Naive thymus-derived CD4-positive, alpha-beta T cell (primary cell): ENCODE measurements at regions of chr2 and their contacts with region 1.

Region 1: GRCh38 chr2:88669371-88670214 is 21.9 kb upstream of the RPIA start:
- DNase-seq: peak in 2 of 9 donors; percentile 11 to 18
- ATAC-seq: peak; percentile 73
- H3K4me3 ChIP-seq: no peak overlapping the region
- H3K4me3 Mint-ChIP-seq: no peak overlapping the region
- H3K27ac ChIP-seq: no peak overlapping the region
- H3K27ac Mint-ChIP-seq: no peak overlapping the region
- H3K4me1 ChIP-seq: no peaks in the 10 kb centered on the region
- H3K4me1 Mint-ChIP-seq: peaks cover 0 to 6% (median 0%) of the 10 kb centered on the region in 7 donors
- H3K27me3 ChIP-seq: no peaks in the 10 kb centered on the region
- H3K27me3 Mint-ChIP-seq: peaks cover 0 to 5% (median 0%) of the 10 kb centered on the region in 5 donors

Region 2: GRCh38 chr2:88187038-88187676 is 482.4 kb before region 1 on chr2:
- CTCF ChIA-PET with region 1: no interaction called
- POLR2A ChIA-PET with region 1: no interaction called
- intact Hi-C with region 1: loop called in 1 of 2 experiments (anchors 10 kb)
- DNase-seq: peak in 2 of 9 donors; percentile 12 to 39
- ATAC-seq: peak; percentile 32
- H3K4me3 ChIP-seq: no peak overlapping the region
- H3K4me3 Mint-ChIP-seq: no peak overlapping the region
- H3K27ac ChIP-seq: no peak overlapping the region
- H3K27ac Mint-ChIP-seq: no peak overlapping the region
- H3K4me1 ChIP-seq: peaks cover 0 to under 1% of the 10 kb centered on the region in 2 donors
- H3K4me1 Mint-ChIP-seq: peaks cover 12 to 28% (median 16%) of the 10 kb centered on the region in 7 donors
- H3K27me3 ChIP-seq: no peaks in the 10 kb centered on the region
- H3K27me3 Mint-ChIP-seq: peaks cover 3 to 10% (median 8%) of the 10 kb centered on the region in 5 donors

Region 3: GRCh38 chr2:88261711-88262110 is 407.9 kb before region 1 on chr2:
- CTCF ChIA-PET with region 1: no interaction called
- POLR2A ChIA-PET with region 1: no interaction called
- intact Hi-C with region 1: loop called in 1 of 2 experiments (anchors 5 kb)
- DNase-seq: no peak
- ATAC-seq: no peak
- H3K4me3 ChIP-seq: no peak overlapping the region
- H3K4me3 Mint-ChIP-seq: no peak overlapping the region
- H3K27ac ChIP-seq: no peak overlapping the region
- H3K27ac Mint-ChIP-seq: no peak overlapping the region
- H3K4me1 ChIP-seq: no peaks in the 10 kb centered on the region
- H3K4me1 Mint-ChIP-seq: peaks cover 0 to 5% (median 0%) of the 10 kb centered on the region in 7 donors
- H3K27me3 ChIP-seq: no peaks in the 10 kb centered on the region
- H3K27me3 Mint-ChIP-seq: peaks cover 0 to 31% (median 10%) of the 10 kb centered on the region in 5 donors

Region 4: DNA sequence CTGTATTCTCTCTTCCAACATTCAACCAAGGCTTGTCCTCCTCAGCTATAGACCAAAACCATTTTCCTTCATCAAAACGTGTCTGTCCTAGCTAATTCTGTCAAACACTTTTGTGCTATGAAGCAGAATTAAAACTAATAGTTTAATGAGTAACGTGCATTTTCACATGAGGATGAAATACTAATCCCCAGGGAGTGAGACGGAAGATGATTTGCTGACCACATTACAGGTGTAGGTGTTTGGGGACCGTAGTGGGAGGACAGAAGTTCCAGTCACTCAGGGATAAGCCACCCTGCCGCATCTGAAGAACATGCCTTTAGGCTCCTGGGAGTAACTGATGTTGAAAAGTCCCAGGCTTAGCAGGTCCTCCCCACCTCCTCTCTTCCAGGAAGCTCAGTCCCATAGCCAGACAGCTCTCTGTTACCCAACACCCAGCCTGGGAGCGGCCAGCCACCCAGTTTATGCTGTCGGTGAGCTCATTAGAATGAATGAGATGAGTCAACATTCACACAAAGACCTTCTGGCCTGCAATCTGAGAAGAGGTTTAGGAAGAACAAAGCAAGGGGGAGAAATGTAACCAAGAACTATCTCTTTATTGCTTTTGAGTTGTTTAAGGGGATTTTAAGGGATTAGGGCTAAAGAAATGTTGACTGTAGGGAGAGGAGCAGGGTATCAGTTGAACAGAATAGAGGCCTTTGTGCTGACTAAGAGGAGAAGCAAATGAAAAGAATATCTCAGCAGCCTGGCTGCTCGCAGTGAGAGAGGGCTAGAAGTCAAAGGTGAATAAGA is 339.6 kb before region 1 on chr2:
- CTCF ChIA-PET with region 1: no interaction called
- POLR2A ChIA-PET with region 1: no interaction called
- intact Hi-C with region 1: loop called in 1 of 2 experiments (anchors 5 kb)
- DNase-seq: no peak
- ATAC-seq: no peak
- H3K4me3 ChIP-seq: no peak overlapping the region
- H3K4me3 Mint-ChIP-seq: no peak overlapping the region
- H3K27ac ChIP-seq: no peak overlapping the region
- H3K27ac Mint-ChIP-seq: no peak overlapping the region
- H3K4me1 ChIP-seq: no peaks in the 10 kb centered on the region
- H3K4me1 Mint-ChIP-seq: no peaks in the 10 kb centered on the region
- H3K27me3 ChIP-seq: no peaks in the 10 kb centered on the region
- H3K27me3 Mint-ChIP-seq: peaks cover 20 to 38% (median 33%) of the 10 kb centered on the region in 5 donors

Region 5: DNA sequence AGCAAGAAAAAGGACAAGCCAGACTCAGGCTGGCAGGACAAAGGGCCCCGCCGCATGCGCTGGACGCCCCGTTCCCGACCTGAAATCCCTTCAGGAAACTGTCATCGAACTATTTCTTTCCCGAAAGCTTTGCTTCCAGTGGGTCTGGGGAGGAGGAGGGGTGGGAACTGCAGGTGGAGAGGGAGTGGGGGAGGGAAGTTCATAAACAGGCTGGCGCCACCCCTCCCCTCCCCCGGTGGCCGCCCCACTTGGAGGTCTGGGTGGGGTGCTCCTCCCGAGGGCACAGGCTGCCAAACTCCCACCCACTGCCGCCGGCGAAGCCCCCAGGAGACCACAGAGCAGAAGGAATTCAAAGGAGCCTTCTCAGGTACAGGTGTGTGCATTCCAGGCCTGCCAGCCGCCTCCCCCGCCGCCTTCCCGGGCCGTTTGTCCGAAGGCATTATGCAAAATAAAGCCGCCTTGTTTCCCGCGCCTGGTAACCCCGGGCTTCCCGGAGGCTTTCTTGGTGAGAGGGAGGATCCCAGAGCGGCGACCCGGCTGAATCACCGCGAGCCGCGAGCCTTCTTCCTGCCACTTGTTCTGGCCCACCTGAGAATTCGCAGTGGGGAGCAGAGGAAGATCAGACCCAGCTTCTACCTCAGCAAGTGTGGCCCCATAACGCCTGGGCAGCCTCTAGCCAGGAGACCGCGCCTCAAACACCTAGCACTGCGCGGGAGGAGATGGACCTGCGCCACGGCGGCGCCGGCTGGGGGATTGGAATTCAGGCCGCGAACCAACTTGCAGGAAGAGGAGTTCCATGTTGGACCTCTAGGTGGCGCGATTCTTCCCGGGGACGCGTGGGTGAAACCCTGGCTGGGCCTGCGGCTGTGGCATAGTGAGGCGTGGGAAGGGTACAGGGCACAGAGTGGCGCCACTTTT is 319.0 kb before region 1 on chr2:
- CTCF ChIA-PET with region 1: no interaction called
- POLR2A ChIA-PET with region 1: no interaction called
- intact Hi-C with region 1: loop called in 1 of 2 experiments (anchors 10 kb)
- DNase-seq: peak; percentile 15 to 71 (median 49)
- ATAC-seq: peak; percentile 74
- H3K4me3 ChIP-seq: peak overlapping the region; percentile 53
- H3K4me3 Mint-ChIP-seq: peak overlapping the region; percentile 66 to 81 (median 74)
- H3K27ac ChIP-seq: no peak overlapping the region
- H3K27ac Mint-ChIP-seq: no peak overlapping the region
- H3K4me1 ChIP-seq: no peaks in the 10 kb centered on the region
- H3K4me1 Mint-ChIP-seq: peaks cover 0 to 13% (median 4%) of the 10 kb centered on the region in 7 donors
- H3K27me3 ChIP-seq: no peaks in the 10 kb centered on the region
- H3K27me3 Mint-ChIP-seq: peaks cover 31 to 61% (median 36%) of the 10 kb centered on the region in 5 donors

Region 6: GRCh38 chr2:88554189-88554588 is 115.4 kb before region 1 on chr2:
- CTCF ChIA-PET with region 1: no interaction called
- POLR2A ChIA-PET with region 1: no interaction called
- intact Hi-C with region 1: no loop called
- DNase-seq: no peak
- ATAC-seq: no peak
- H3K4me3 ChIP-seq: no peak overlapping the region
- H3K4me3 Mint-ChIP-seq: no peak overlapping the region
- H3K27ac ChIP-seq: no peak overlapping the region
- H3K27ac Mint-ChIP-seq: peak overlapping the region in 2 of 9 donors; percentile 31 to 51
- H3K4me1 ChIP-seq: no peaks in the 10 kb centered on the region
- H3K4me1 Mint-ChIP-seq: peaks cover 0 to 8% (median 4%) of the 10 kb centered on the region in 7 donors
- H3K27me3 ChIP-seq: no peaks in the 10 kb centered on the region
- H3K27me3 Mint-ChIP-seq: peaks cover 13 to 19% (median 14%) of the 10 kb centered on the region in 5 donors

Region 7: GRCh38 chr2:88590998-88591613 is 78.5 kb before region 1 on chr2:
- CTCF ChIA-PET with region 1: interaction called, 66 read pairs
- POLR2A ChIA-PET with region 1: no interaction called
- intact Hi-C with region 1: loop called (anchors 1 kb)
- DNase-seq: peak in 8 of 9 donors; percentile 19 to 56 (median 38)
- ATAC-seq: peak; percentile 87
- H3K4me3 ChIP-seq: no peak overlapping the region
- H3K4me3 Mint-ChIP-seq: no peak overlapping the region
- H3K27ac ChIP-seq: no peak overlapping the region
- H3K27ac Mint-ChIP-seq: peak overlapping the region in 3 of 9 donors; percentile 20 to 68 (median 47)
- H3K4me1 ChIP-seq: no peaks in the 10 kb centered on the region
- H3K4me1 Mint-ChIP-seq: peaks cover 0 to 3% (median 0%) of the 10 kb centered on the region in 7 donors
- H3K27me3 ChIP-seq: no peaks in the 10 kb centered on the region
- H3K27me3 Mint-ChIP-seq: no peaks in the 10 kb centered on the region

Region 8: DNA sequence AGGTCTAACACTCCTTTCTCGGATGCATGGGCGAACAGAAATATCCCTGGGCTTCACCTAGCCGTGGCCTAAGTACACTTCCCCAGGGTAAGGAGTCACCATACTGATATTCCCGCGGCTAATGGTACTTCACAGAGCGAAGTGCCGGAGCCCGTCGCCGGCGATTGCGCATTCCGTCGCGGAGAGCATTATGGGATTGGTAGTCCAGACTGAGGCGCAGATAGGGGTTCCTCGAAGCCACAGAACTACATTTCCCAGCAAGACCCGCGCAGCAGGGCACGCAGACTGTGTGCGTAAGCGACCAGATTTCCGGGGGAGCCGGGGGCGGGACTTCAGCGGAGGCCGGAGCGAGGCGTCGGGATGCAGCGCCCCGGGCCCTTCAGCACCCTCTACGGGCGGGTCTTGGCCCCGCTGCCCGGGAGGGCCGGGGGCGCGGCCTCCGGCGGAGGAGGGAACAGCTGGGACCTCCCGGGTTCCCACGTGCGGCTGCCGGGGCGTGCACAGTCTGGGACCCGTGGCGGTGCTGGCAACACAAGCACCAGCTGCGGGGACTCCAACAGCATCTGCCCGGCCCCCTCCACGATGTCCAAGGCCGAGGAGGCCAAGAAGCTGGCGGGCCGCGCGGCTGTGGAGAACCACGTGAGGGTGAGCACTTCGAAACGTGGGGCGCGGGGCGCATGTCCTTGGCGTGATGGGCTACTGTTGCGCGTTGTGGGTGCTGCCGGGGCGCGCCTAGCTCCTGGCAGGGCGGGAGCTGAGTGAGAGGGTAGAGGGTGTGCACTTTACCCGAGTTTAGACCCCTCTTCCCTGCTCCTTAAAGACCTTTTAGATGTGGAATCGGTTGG is 22.0 kb after region 1 on chr2 and contains the start of gene RPIA:
- CTCF ChIA-PET with region 1: interaction called, 3 read pairs
- POLR2A ChIA-PET with region 1: no interaction called
- intact Hi-C with region 1: loop called in 1 of 2 experiments (anchors 1 kb)
- DNase-seq: peak; percentile 93 to 99 (median 98)
- ATAC-seq: peak; percentile 98
- H3K4me3 ChIP-seq: peak within 1 kb of the TSS; percentile 89
- H3K4me3 Mint-ChIP-seq: peak within 1 kb of the TSS; percentile 93 to 99 (median 98)
- H3K27ac ChIP-seq: peak within 1 kb of the TSS; percentile 83
- H3K27ac Mint-ChIP-seq: peak within 1 kb of the TSS; percentile 86 to 98 (median 94)
- H3K4me1 ChIP-seq: peaks cover 14 to 21% of the 10 kb centered on the region in 2 donors
- H3K4me1 Mint-ChIP-seq: peaks cover 24 to 70% (median 67%) of the 10 kb centered on the region in 7 donors
- H3K27me3 ChIP-seq: no peaks in the 10 kb centered on the region
- H3K27me3 Mint-ChIP-seq: no peaks in the 10 kb centered on the region
- total RNA-seq, gene RPIA: 16.4 to 38.4 (median 23.1) TPM

Region 9: GRCh38 chr2:88959480-88960220 is 290.1 kb after region 1 on chr2:
- CTCF ChIA-PET with region 1: no interaction called
- POLR2A ChIA-PET with region 1: no interaction called
- intact Hi-C with region 1: no loop called
- DNase-seq: no peak
- ATAC-seq: no peak
- H3K4me3 ChIP-seq: no peak overlapping the region
- H3K4me3 Mint-ChIP-seq: no peak overlapping the region
- H3K27ac ChIP-seq: no peak overlapping the region
- H3K27ac Mint-ChIP-seq: no peak overlapping the region
- H3K4me1 ChIP-seq: no peaks in the 10 kb centered on the region
- H3K4me1 Mint-ChIP-seq: peaks cover 0 to 5% (median 0%) of the 10 kb centered on the region in 7 donors
- H3K27me3 ChIP-seq: peaks cover 0 to 3% of the 10 kb centered on the region in 2 donors
- H3K27me3 Mint-ChIP-seq: peaks cover 3 to 45% (median 27%) of the 10 kb centered on the region in 5 donors